Sciatic nerve (tissue), 2 donors: ENCODE measurements at regions of chr1 and their contacts with region 1.

Region 1: GRCh38 chr1:197614916-197615692 is 160.2 kb downstream of the DENND1B start:
- DNase-seq: no peak
- ATAC-seq: peak; percentile 71

Region 2: GRCh38 chr1:197587815-197588517 is 27.1 kb before region 1 on chr1:
- intact Hi-C with region 1: no loop called
- DNase-seq: no peak
- ATAC-seq: no peak

Region 3: GRCh38 chr1:197633447-197634039 is 18.4 kb after region 1 on chr1:
- intact Hi-C with region 1: no loop called
- DNase-seq: no peak
- ATAC-seq: no peak

Region 4: GRCh38 chr1:197663178-197663953 is 48.3 kb after region 1 on chr1:
- intact Hi-C with region 1: no loop called
- DNase-seq: no peak
- ATAC-seq: no peak

Region 5: DNA sequence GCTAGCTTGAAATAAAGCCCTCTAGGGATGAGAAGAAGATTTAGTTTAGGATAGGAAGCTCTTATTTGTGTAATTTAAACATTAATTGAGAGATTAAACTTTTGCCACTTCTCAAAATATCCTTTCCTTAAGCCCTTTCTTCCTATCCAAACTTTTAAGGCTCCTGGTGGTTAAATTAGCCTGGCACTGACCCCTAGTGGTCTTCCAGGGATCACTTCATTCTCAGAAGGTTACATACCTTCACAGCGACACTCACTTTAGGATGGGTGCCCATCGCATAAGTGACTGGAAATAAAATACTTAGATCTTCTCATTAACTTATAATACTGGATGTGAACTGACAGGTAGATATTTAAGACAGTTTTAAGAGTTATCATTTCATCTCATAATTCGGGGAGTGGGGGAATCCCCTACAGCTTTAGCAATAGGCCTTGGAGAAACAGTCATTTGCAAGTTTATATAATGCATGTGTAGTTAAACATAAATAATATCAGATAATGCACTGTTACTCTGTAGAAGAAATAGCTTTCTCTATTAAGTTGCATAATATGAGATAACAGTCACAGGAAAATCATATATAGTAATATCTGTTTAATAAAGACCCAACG is 309.5 kb after region 1 on chr1:
- intact Hi-C with region 1: loop called (anchors 10 kb)
- DNase-seq: no peak
- ATAC-seq: no peak